Right ventricle myocardium inferior (tissue), 1 donor: ENCODE measurements at regions of chr19 and their contacts with region 1.

Region 1: DNA sequence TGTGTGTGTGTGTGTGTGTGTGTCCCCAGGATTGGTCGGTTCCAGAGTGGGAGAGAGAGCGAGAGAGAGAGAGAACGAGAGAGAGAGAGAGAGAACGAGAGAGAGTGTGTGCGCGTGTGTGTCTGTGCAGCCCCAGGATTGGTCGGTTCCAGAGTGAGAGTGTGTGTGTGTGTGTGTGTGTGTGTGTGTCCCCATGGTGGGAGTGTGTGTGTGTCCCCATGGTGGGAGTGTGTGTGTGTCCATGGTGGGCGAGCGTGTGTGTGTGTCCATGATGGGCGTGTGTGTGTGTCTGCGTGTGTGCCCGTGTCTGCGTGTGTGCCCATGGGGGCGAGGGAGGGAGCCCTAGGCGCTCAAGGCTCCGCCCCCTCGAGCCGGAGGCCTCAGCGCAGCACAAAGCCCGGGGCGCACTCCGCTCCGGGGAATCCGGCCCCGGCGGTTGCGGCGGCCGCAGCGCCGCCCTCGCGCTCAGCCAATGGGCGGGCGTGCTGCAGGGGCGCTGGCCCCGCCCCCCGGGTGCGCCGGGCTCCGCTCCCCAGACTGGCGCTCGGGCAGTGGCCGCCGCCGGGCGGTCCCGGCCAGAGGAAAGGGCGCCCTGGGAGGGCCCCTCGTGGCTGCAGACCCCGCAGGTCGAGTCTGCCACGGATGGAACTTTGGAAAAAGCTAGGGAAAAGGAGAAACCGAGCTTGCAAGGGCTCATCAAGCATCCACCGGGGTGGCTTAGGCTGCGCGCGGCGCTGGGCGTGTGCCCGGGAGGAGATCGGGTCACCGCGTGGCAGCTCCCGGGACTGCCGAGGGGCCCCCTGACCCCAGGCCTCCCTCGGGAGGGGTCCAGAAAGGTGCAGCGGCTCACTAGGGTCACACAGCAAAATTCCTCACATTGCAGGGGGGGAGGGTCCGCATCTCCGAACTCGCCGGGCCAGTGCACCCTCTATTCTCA is 96.2 kb downstream of the INSR start:
- DNase-seq: peak; percentile 96
- ATAC-seq: peak; percentile 94

Region 2: GRCh38 chr19:6906559-6907060 is 291.4 kb before region 1 on chr19:
- intact Hi-C with region 1: no loop called
- DNase-seq: no peak
- ATAC-seq: no peak

Region 3: DNA sequence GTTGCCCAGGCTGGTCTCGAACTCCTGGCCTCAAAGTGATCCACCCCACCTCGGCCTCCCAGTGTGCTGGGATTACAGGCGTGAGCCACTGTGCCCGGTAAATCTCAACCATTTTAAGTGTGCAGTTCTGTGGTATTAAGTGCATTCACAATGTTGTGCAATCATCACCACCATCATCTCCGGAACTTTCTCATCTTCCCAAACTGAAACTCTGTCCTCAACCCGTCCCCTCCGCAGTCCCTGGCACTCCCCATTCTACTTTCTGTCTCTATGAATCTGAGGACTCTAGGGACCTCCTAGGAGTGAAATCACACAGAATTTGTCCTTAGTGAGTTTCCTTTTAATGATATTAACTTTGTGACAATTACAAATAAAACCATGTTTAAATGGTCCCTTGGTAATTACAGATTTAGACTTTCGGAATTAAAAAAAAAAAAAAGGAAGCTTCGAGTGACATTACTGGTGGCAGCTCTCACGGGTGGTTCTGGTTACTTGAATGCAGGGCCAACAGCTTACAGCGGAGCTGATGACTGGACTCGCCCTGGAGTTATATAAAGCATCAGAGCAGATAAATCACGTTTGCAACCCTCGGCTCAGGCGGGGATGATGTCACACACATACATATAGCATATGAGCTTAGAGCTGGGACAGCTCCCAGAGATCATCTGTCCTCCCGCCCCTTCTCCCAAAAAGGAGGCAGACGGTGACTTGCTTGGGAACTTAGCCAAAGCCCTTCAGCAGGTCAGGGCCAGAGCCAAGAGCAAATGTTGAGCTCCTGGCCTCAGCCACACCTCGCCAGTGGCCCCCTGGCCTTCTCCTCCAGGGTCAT is 38.7 kb before region 1 on chr19:
- intact Hi-C with region 1: loop called (anchors 5 kb)
- DNase-seq: peak; percentile 82
- ATAC-seq: peak; percentile 96